Naive thymus-derived CD4-positive, alpha-beta T cell (primary cell): ENCODE measurements at regions of chr2 and their contacts with region 1.

Region 1: GRCh38 chr2:170815746-170816503 is 762 bp upstream of the GAD1 start:
- DNase-seq: peak in 8 of 9 donors; percentile 33 to 70 (median 58)
- ATAC-seq: peak; percentile 68
- H3K4me3 ChIP-seq: peak overlapping the region; percentile 54
- H3K4me3 Mint-ChIP-seq: peak overlapping the region; percentile 59 to 86 (median 74)
- H3K27ac ChIP-seq: no peak overlapping the region
- H3K27ac Mint-ChIP-seq: peak overlapping the region in 2 of 9 donors; percentile 56 to 79
- H3K4me1 ChIP-seq: peaks cover 37 to 48% of the 10 kb centered on the region in 2 donors
- H3K4me1 Mint-ChIP-seq: peaks cover 30 to 78% (median 56%) of the 10 kb centered on the region in 7 donors
- H3K27me3 ChIP-seq: peaks cover 30 to 44% of the 10 kb centered on the region in 2 donors
- H3K27me3 Mint-ChIP-seq: peaks cover 67 to 84% (median 73%) of the 10 kb centered on the region in 5 donors

Region 2: GRCh38 chr2:170235860-170236679 is 579.9 kb before region 1 on chr2:
- CTCF ChIA-PET with region 1: interaction called, 3 read pairs
- POLR2A ChIA-PET with region 1: no interaction called
- intact Hi-C with region 1: loop called (anchors 1 kb)
- DNase-seq: peak in 2 of 9 donors; percentile 0 to 2
- ATAC-seq: no peak
- H3K4me3 ChIP-seq: no peak overlapping the region
- H3K4me3 Mint-ChIP-seq: no peak overlapping the region
- H3K27ac ChIP-seq: no peak overlapping the region
- H3K27ac Mint-ChIP-seq: no peak overlapping the region
- H3K4me1 ChIP-seq: no peaks in the 10 kb centered on the region
- H3K4me1 Mint-ChIP-seq: no peaks in the 10 kb centered on the region
- H3K27me3 ChIP-seq: no peaks in the 10 kb centered on the region
- H3K27me3 Mint-ChIP-seq: peaks cover 18 to 32% (median 29%) of the 10 kb centered on the region in 5 donors

Region 3: DNA sequence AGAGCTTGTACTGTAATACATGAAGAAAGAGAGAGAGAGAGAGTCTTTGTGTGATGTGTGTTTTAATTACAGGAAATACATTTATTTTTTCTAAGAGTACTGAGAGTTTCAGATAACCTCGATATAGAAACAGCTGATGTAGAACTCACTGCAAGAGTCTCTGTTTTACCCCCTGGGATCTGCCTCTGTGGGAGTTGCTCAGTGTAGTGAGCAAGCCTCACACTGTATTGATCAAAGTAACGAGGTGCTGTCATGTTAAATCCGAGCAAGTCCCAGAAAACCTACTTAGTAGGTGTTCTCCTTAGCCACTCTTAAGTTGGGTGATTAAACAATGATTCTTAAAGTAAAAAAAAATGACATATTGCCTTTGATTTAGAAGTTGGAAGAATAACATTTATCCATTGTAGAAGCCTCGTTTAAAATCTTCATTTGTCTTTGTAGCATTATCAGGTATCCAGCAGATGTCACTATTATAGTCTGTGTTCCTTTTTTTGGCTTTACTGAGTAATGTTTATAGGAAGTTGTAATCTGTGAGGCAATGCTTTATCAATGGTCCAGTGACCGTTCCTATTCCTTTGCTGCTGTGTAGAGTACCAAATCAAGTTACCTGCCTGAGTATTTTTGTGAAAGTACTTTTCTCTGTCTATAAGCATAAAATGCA is 419.0 kb before region 1 on chr2:
- CTCF ChIA-PET with region 1: interaction called, 3 read pairs
- POLR2A ChIA-PET with region 1: no interaction called
- intact Hi-C with region 1: loop called (anchors 1 to 2 kb)
- DNase-seq: peak in 2 of 9 donors; percentile 10 to 15
- ATAC-seq: no peak
- H3K4me3 ChIP-seq: no peak overlapping the region
- H3K4me3 Mint-ChIP-seq: no peak overlapping the region
- H3K27ac ChIP-seq: no peak overlapping the region
- H3K27ac Mint-ChIP-seq: no peak overlapping the region
- H3K4me1 ChIP-seq: no peaks in the 10 kb centered on the region
- H3K4me1 Mint-ChIP-seq: peaks cover 0 to 8% (median 0%) of the 10 kb centered on the region in 7 donors
- H3K27me3 ChIP-seq: no peaks in the 10 kb centered on the region
- H3K27me3 Mint-ChIP-seq: peaks cover 33 to 64% (median 43%) of the 10 kb centered on the region in 5 donors

Region 4: DNA sequence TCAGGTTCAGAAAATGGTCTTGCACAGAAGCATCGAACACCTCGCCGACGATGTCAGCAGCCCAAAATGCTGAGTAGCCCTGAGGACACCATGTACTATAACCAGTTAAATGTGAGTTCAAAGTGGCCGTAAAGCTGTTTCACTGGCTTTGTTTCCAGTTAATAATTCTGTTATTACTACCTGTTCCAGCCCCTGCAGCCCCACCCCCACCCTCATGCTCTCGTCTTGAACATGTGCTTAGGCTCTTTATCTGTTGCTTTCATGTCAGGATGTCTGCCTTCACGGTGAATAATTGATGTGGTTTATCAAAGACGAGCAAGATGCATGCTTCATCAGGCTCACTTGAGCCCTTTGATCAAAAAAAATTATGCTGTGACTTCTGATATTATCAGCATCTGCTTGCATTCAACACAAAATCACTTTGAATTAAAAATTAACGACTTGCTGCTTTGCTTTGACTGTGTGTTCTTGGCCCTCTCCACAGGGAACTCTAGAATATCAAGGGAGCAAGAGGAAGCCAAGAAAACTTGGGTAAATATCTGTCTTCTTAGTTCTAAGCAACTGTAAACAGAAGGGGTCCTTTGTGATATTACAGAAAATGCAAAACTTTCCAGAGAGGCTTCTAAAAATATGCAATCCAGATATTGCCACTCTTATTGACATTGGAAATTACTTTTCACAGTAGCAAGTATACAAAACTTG is 164.2 kb before region 1 on chr2:
- CTCF ChIA-PET with region 1: no interaction called
- POLR2A ChIA-PET with region 1: no interaction called
- intact Hi-C with region 1: loop called in 1 of 2 experiments (anchors 5 kb)
- DNase-seq: peak in 7 of 9 donors; percentile 74 to 89 (median 84)
- ATAC-seq: peak; percentile 99
- H3K4me3 ChIP-seq: no peak overlapping the region
- H3K4me3 Mint-ChIP-seq: peak overlapping the region; percentile 44 to 80 (median 64)
- H3K27ac ChIP-seq: no peak overlapping the region
- H3K27ac Mint-ChIP-seq: peak overlapping the region in 7 of 9 donors; percentile 12 to 87 (median 25)
- H3K4me1 ChIP-seq: peaks cover 11 to 23% of the 10 kb centered on the region in 2 donors
- H3K4me1 Mint-ChIP-seq: peaks cover 17 to 35% (median 32%) of the 10 kb centered on the region in 7 donors
- H3K27me3 ChIP-seq: no peaks in the 10 kb centered on the region
- H3K27me3 Mint-ChIP-seq: peaks cover 0 to 20% (median 9%) of the 10 kb centered on the region in 5 donors

Region 5: DNA sequence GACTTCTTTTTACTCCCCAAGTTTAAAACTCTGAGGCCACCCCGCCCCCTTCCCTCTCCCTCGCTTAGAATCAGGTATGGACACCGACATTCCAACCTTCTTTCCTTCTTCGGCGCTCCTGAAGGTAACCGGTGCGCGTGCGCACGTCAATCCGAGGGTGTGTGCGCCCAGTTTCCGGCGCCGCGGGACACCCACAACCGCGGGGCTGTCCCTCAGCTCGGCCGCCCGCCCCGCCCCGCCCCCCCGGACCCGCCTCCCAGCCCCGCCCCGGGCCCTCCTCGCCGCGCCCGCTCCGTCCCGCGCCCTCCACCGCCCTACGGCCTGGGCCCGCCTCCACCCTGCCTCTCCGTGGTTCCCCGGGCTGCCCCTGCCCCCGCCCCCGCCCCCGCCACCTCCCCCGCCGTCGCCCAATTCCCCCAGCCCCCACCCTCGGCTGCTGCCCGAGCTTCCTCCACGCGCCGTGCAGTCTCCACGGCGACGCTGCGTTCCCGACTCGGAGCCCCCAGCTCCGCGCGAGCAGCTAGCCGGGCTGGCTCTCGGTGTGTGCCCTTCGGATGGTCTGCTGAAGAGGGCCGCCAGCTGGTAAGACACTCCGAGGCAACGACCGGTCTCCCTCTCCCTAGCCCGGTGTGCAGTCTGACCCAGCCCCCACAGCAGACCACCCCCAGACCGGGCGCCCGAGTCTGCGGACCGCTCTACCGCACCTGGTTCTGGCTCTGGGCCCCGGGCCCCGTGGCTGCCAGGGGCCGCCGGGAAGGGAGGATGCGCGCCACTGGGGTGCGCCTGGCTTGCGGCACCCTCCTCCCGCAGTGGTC is 45.1 kb before region 1 on chr2:
- CTCF ChIA-PET with region 1: interaction called, 3 read pairs
- POLR2A ChIA-PET with region 1: interaction called, 5 read pairs
- intact Hi-C with region 1: loop called (anchors 1 to 2 kb)
- DNase-seq: peak; percentile 31 to 77 (median 50)
- ATAC-seq: peak; percentile 91
- H3K4me3 ChIP-seq: peak overlapping the region; percentile 74
- H3K4me3 Mint-ChIP-seq: peak overlapping the region; percentile 77 to 91 (median 84)
- H3K27ac ChIP-seq: peak overlapping the region; percentile 51
- H3K27ac Mint-ChIP-seq: peak overlapping the region in 6 of 9 donors; percentile 27 to 80 (median 55)
- H3K4me1 ChIP-seq: peaks cover 4 to 8% of the 10 kb centered on the region in 2 donors
- H3K4me1 Mint-ChIP-seq: peaks cover 6 to 34% (median 18%) of the 10 kb centered on the region in 7 donors
- H3K27me3 ChIP-seq: no peaks in the 10 kb centered on the region
- H3K27me3 Mint-ChIP-seq: peaks cover 0 to 52% (median 10%) of the 10 kb centered on the region in 5 donors

Region 6: GRCh38 chr2:170856066-170856465 is 40.1 kb after region 1 on chr2:
- CTCF ChIA-PET with region 1: no interaction called
- POLR2A ChIA-PET with region 1: no interaction called
- intact Hi-C with region 1: no loop called
- DNase-seq: no peak
- ATAC-seq: no peak
- H3K4me3 ChIP-seq: no peak overlapping the region
- H3K4me3 Mint-ChIP-seq: no peak overlapping the region
- H3K27ac ChIP-seq: no peak overlapping the region
- H3K27ac Mint-ChIP-seq: no peak overlapping the region
- H3K4me1 ChIP-seq: no peaks in the 10 kb centered on the region
- H3K4me1 Mint-ChIP-seq: no peaks in the 10 kb centered on the region
- H3K27me3 ChIP-seq: no peaks in the 10 kb centered on the region
- H3K27me3 Mint-ChIP-seq: peaks cover 0 to 8% (median 0%) of the 10 kb centered on the region in 5 donors